T-cell (primary cell): ENCODE measurements at regions of chr5 and their contacts with region 1.

Region 1: DNA sequence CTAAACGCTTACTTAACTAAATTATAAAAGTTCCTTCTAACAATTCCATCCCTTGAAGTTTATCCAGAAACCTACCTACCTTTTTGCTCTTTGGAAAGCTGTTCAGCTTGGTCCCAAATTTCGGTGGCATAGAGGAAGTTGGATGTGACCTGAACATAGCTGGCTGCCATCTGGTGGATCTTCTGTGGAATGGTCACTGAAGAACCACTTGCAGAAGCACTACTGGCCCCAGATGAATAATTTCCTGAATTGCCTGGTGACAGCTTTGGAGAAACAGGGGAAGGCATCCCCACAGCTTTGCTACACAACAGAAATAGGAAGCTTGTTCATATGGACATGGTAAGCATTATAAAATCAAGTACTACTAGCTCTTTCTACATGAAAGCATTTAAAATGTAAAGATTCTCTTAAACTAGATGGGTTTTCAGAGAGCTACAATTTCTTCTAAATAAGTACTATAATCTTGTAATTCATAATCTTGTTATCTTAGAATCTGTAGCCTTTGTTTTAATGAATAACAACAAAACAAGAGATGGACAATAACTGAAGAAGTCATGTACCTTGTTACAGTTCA is 9.9 kb downstream of the LEAP2 start:
- DNase-seq: peak in 14 of 35 experiments; percentile 5 to 63 (median 12)
- ATAC-seq: peak in 3 of 4 experiments; percentile 52 to 63 (median 58)
- H3K4me3 ChIP-seq: no peak overlapping the region
- H3K4me3 Mint-ChIP-seq: no peak overlapping the region
- H3K27ac ChIP-seq: no peak overlapping the region
- H3K27ac Mint-ChIP-seq: peak overlapping the region in 1 of 2 donors; percentile 1
- H3K4me1 ChIP-seq: no peaks in the 10 kb centered on the region
- H3K4me1 Mint-ChIP-seq: no peaks in the 10 kb centered on the region
- H3K27me3 ChIP-seq: no peaks in the 10 kb centered on the region
- H3K27me3 Mint-ChIP-seq: no peaks in the 10 kb centered on the region

Region 2: DNA sequence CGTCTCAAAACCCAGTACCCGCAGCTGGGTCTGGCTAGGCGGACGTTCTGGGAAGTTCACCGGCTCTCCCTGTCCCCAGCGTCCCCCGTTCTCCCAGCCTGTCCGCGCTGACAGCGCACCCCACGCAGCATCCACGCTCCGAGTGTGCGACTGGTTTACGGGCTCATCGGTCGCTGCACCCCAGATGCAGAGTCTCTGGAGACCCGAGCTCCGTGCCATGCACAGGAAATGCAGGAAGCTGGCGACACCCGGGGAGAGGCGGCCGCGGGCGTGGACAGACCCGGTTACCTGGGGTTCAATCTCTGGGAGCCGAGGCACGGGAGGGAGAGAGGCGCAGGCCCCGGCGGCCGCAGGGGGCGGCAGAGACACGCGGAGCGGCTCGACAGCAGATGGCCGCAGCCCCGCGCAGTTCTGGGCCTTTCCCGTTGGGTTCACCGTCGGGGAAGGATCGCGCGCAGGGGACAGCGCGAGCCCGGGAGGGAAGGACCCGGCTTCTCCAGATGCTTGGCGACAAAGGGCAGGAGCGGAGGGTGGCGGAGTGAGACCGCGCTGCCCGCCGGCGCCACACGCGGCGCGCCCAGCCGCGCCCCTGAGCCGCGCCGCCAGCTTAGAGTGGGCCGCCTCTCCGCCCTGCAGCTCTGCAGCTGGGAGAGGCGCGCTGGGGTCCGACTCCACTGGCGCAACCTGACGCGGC is 53.5 kb before region 1 on chr5:
- CTCF ChIA-PET with region 1: interaction called, 4 to 10 read pairs
- POLR2A ChIA-PET with region 1: no interaction called
- DNase-seq: peak; percentile 31 to 83 (median 61)
- ATAC-seq: peak; percentile 90 to 93 (median 91)
- H3K4me3 ChIP-seq: peak overlapping the region; percentile 26 to 49
- H3K4me3 Mint-ChIP-seq: peak overlapping the region; percentile 81 to 88 (median 87)
- H3K27ac ChIP-seq: no peak overlapping the region
- H3K27ac Mint-ChIP-seq: no peak overlapping the region
- H3K4me1 ChIP-seq: peaks cover 0 to 25% of the 10 kb centered on the region in 2 experiments
- H3K4me1 Mint-ChIP-seq: peaks cover 10 to 23% (median 11%) of the 10 kb centered on the region in 3 donors
- H3K27me3 ChIP-seq: peaks cover 3 to 56% of the 10 kb centered on the region in 2 experiments
- H3K27me3 Mint-ChIP-seq: peaks cover 35 to 53% of the 10 kb centered on the region in 2 donors